Gastrocnemius medialis (tissue), 4 donors: ENCODE measurements at regions of chr16 and their contacts with region 1.

Region 1: GRCh38 chr16:63856537-63856936 is 1265.3 kb downstream of the CDH11 start:
- DNase-seq: no peak
- ATAC-seq: no peak
- H3K4me3 ChIP-seq: no peak overlapping the region
- H3K27ac ChIP-seq: no peak overlapping the region
- H3K4me1 ChIP-seq: no peaks in the 10 kb centered on the region
- H3K27me3 ChIP-seq: no peaks in the 10 kb centered on the region
- CTCF ChIP-seq: no peak
- POLR2A ChIP-seq: no peak

Region 2: DNA sequence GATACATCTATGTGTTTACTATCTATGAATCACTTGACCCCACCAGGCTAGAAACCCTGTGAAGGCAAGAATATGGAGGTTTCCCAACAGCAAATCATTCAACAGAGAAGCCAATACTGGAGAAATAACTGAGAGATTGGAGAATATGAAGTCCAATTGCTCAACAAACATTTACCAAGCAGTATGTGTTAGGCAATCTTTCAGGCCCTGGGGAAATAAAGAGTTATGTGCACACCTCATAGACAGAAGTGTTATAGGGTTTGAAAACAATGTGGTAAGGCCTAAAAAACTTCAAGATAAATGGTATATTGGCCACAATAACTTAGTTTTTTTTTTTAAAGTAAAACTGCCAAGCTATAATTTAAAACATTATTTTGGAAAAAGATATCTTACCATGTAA is 19.6 kb after region 1 on chr16:
- in situ Hi-C with region 1: no loop called
- intact Hi-C with region 1: loop called (anchors 2 kb)
- DNase-seq: no peak
- ATAC-seq: no peak
- H3K4me3 ChIP-seq: no peak overlapping the region
- H3K27ac ChIP-seq: no peak overlapping the region
- H3K4me1 ChIP-seq: no peaks in the 10 kb centered on the region
- H3K27me3 ChIP-seq: no peaks in the 10 kb centered on the region
- CTCF ChIP-seq: no peak
- POLR2A ChIP-seq: no peak

Region 3: DNA sequence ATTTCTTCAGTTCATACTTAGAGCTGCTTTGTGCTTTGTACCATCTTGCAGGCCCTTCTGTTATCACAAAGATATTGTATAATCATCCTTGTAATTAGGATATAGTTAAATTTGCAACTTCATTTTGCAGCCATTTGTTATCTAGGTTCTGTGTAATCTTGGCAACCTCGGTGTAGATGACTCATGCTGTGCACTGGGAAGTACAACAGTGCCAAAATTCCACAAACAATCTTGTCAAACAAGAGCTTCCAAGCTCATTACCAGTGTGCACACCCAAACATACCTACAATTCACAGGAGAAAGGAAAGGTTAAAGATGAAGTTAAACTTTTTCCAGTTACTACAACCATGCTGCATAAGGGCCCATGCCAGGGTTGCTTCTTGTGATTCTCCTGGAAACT is 33.5 kb after region 1 on chr16:
- in situ Hi-C with region 1: no loop called
- intact Hi-C with region 1: no loop called
- DNase-seq: no peak
- ATAC-seq: peak in 1 of 2 donors; percentile 16
- H3K4me3 ChIP-seq: no peak overlapping the region
- H3K27ac ChIP-seq: no peak overlapping the region
- H3K4me1 ChIP-seq: no peaks in the 10 kb centered on the region
- H3K27me3 ChIP-seq: no peaks in the 10 kb centered on the region
- CTCF ChIP-seq: no peak
- POLR2A ChIP-seq: no peak